OCI-LY7 (cell line): ENCODE measurements at regions of chr2 and their contacts with region 1.

Region 1: GRCh38 chr2:173874894-173875237 is 90.3 kb downstream of the SP3 start:
- DNase-seq: peak; percentile 95
- H3K4me3 ChIP-seq: peak overlapping the region; percentile 58
- H3K27ac ChIP-seq: peak overlapping the region; percentile 99
- H3K4me1 ChIP-seq: peaks cover 78% of the 10 kb centered on the region
- CTCF ChIP-seq: no peak

Region 2: GRCh38 chr2:173571021-173571882 is 303.6 kb before region 1 on chr2:
- CTCF ChIA-PET with region 1: no interaction called
- POLR2A ChIA-PET with region 1: no interaction called
- intact Hi-C with region 1: loop called (anchors 2 kb)
- DNase-seq: peak; percentile 50
- H3K4me3 ChIP-seq: no peak overlapping the region
- H3K27ac ChIP-seq: no peak overlapping the region
- H3K4me1 ChIP-seq: no peaks in the 10 kb centered on the region
- CTCF ChIP-seq: peak; percentile 64

Region 3: GRCh38 chr2:173749315-173749714 is 125.6 kb before region 1 on chr2:
- CTCF ChIA-PET with region 1: no interaction called
- POLR2A ChIA-PET with region 1: no interaction called
- intact Hi-C with region 1: loop called (anchors 5 kb)
- DNase-seq: no peak
- H3K4me3 ChIP-seq: no peak overlapping the region
- H3K27ac ChIP-seq: no peak overlapping the region
- H3K4me1 ChIP-seq: no peaks in the 10 kb centered on the region
- CTCF ChIP-seq: peak; percentile 25; the same call in 1 of the 2 replicates

Region 4: DNA sequence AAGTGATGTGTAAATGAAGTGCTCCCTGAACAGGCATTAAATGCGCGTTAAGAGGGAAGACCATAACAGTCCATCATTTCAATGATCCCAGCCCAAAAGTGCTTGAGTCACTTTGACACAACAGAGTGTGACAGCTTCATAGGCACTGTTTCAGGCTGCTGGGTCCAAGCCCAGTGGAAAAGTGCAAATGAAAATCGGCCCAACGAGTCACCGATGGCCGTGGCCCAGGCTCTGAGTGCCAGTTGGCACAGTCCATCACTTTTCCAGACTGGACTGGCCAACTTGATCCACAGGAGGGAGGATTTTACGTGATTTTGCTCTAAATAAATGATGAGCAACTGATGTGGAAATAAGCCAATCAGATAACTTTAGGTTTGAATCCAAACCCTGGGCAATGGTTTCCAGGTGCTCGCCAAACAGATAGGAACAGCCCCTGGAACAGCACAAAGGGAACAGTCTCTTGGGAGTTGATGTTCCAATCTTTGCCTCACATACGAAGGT is 23.7 kb before region 1 on chr2:
- CTCF ChIA-PET with region 1: no interaction called
- POLR2A ChIA-PET with region 1: no interaction called
- intact Hi-C with region 1: no loop called
- DNase-seq: no peak
- H3K4me3 ChIP-seq: no peak overlapping the region
- H3K27ac ChIP-seq: no peak overlapping the region
- H3K4me1 ChIP-seq: peaks cover 5% of the 10 kb centered on the region
- CTCF ChIP-seq: no peak

Region 5: DNA sequence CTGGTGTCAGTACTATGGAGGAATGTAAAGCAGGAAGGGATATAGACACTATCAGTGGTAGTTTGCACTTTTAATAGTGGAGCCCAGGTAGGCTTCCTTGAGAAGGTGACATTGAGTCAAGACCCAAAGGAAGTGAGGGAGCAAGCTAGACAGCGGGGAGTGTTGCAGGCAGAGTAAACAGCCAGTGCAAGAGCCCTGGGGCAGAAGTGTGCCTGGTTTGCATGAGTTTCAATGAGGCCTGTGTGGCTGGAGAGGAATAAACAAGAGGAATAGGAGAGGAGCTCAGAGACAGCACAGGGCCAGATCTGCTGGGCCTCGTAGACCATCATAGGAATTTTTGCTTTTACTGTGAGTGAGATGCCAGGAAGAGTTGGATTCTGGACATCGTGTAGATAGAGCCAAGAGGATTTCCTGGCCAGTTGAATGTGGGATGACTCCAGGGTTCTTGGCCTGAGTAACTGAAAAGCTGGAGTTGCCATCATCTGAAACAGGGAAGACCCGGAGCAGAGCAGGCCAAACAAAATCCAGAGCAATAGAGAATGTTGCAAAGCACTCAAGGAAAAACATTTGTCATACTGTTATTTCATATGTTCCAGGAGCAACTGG is 12.2 kb before region 1 on chr2:
- CTCF ChIA-PET with region 1: interaction called, 3 read pairs
- POLR2A ChIA-PET with region 1: interaction called, 16 read pairs
- intact Hi-C with region 1: no loop called
- DNase-seq: no peak
- H3K4me3 ChIP-seq: no peak overlapping the region
- H3K27ac ChIP-seq: no peak overlapping the region
- H3K4me1 ChIP-seq: peaks cover 32% of the 10 kb centered on the region
- CTCF ChIP-seq: no peak

Region 6: GRCh38 chr2:173898178-173898668 is 23.4 kb after region 1 on chr2:
- CTCF ChIA-PET with region 1: no interaction called
- POLR2A ChIA-PET with region 1: interaction called, 6 read pairs
- intact Hi-C with region 1: loop called (anchors 1 kb)
- DNase-seq: peak; percentile 76
- H3K4me3 ChIP-seq: peak overlapping the region; percentile 13
- H3K27ac ChIP-seq: peak overlapping the region; percentile 20
- H3K4me1 ChIP-seq: peaks cover 27% of the 10 kb centered on the region
- CTCF ChIP-seq: no peak

Region 7: GRCh38 chr2:173922760-173923159 is 47.9 kb after region 1 on chr2:
- CTCF ChIA-PET with region 1: no interaction called
- POLR2A ChIA-PET with region 1: no interaction called
- intact Hi-C with region 1: no loop called
- DNase-seq: no peak
- H3K4me3 ChIP-seq: no peak overlapping the region
- H3K27ac ChIP-seq: no peak overlapping the region
- H3K4me1 ChIP-seq: peaks cover 15% of the 10 kb centered on the region
- CTCF ChIP-seq: no peak

Region 8: GRCh38 chr2:174039551-174040416 is 164.9 kb after region 1 on chr2:
- CTCF ChIA-PET with region 1: no interaction called
- POLR2A ChIA-PET with region 1: no interaction called
- intact Hi-C with region 1: loop called (anchors 2 kb)
- DNase-seq: peak; percentile 92
- H3K4me3 ChIP-seq: peak overlapping the region; percentile 38
- H3K27ac ChIP-seq: peak overlapping the region; percentile 63
- H3K4me1 ChIP-seq: peaks cover 6% of the 10 kb centered on the region
- CTCF ChIP-seq: peak; percentile 94

Region 9: DNA sequence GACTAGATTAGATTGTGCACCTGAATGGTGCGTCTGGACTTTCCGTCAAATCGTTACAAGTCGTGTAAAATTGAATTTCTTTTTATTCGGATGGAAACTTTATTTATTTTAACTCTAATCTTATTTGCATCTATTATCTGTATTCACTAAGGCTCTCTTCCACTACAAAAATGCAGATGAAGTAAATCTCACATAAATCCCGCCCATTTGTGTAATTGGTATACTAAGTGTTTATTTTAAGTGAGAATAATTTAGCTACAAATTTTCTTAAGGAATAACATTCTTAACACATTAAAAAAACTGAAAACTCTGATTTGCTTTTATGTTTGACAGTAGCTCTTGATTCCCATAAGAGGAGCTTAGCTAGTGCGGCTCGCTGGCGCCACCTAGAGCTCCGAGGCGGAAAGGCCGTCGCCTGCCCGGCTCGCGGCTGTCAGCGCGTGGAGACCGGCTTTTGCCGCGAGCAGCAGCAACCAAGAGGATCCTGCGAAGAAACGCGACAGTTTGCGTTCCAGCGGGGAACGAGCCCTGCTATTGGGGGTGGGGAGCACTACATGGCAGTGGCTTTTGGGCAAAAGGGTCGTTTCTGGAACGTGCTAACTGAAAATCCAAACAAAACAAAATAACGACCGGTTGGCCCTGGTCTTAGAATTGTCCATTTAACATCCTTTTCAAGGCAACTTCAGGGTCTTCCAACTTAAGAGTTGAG is 466.6 kb after region 1 on chr2:
- CTCF ChIA-PET with region 1: no interaction called
- POLR2A ChIA-PET with region 1: no interaction called
- intact Hi-C with region 1: loop called (anchors 10 kb)
- DNase-seq: peak; percentile 83
- H3K4me3 ChIP-seq: peak overlapping the region; percentile 49
- H3K27ac ChIP-seq: no peak overlapping the region
- H3K4me1 ChIP-seq: peaks cover 16% of the 10 kb centered on the region
- CTCF ChIP-seq: peak; percentile 99